ENCODE measurements at regions of chr11 and their contacts with region 1.

Region 1: GRCh38 chr11:57792060-57792541 is 30.5 kb downstream of the CTNND1 start:
- DNase-seq: peak; percentile 89
- ATAC-seq: peak; percentile 96
- H3K4me3 Mint-ChIP-seq: peak overlapping the region; percentile 34
- H3K27ac Mint-ChIP-seq: peak overlapping the region; percentile 89
- H3K4me1 Mint-ChIP-seq: peaks cover 33% of the 10 kb centered on the region
- H3K27me3 Mint-ChIP-seq: no peaks in the 10 kb centered on the region

Region 2: GRCh38 chr11:57712256-57713150 is 79.6 kb before region 1 on chr11 and contains the start of gene TMX2:
- CTCF ChIA-PET with region 1: no interaction called
- POLR2A ChIA-PET with region 1: no interaction called
- intact Hi-C with region 1: loop called (anchors 2 kb)
- DNase-seq: peak; percentile 94
- ATAC-seq: peak; percentile 93
- H3K4me3 Mint-ChIP-seq: peak within 1 kb of the TSS; percentile 97
- H3K27ac Mint-ChIP-seq: peak within 1 kb of the TSS; percentile 97
- H3K4me1 Mint-ChIP-seq: peaks cover 50% of the 10 kb centered on the region
- H3K27me3 Mint-ChIP-seq: no peaks in the 10 kb centered on the region
- total RNA-seq, gene TMX2: 59.8 to 72.5 TPM

Region 3: GRCh38 chr11:57761301-57762234 is 30.5 kb before region 1 on chr11 and contains the start of gene CTNND1:
- CTCF ChIA-PET with region 1: no interaction called
- POLR2A ChIA-PET with region 1: no interaction called
- intact Hi-C with region 1: loop called in 1 of 2 experiments (anchors 2 kb)
- DNase-seq: peak; percentile 30
- ATAC-seq: peak; percentile 59
- H3K4me3 Mint-ChIP-seq: peak within 1 kb of the TSS; percentile 69
- H3K27ac Mint-ChIP-seq: peak within 1 kb of the TSS; percentile 32
- H3K4me1 Mint-ChIP-seq: peaks cover 37% of the 10 kb centered on the region
- H3K27me3 Mint-ChIP-seq: no peaks in the 10 kb centered on the region
- total RNA-seq, gene CTNND1: 6.7 to 7.4 TPM

Region 4: GRCh38 chr11:57873196-57873911 is 81.3 kb after region 1 on chr11:
- CTCF ChIA-PET with region 1: no interaction called
- POLR2A ChIA-PET with region 1: no interaction called
- intact Hi-C with region 1: no loop called
- DNase-seq: no peak
- ATAC-seq: no peak
- H3K4me3 Mint-ChIP-seq: no peak overlapping the region
- H3K27ac Mint-ChIP-seq: no peak overlapping the region
- H3K4me1 Mint-ChIP-seq: no peaks in the 10 kb centered on the region
- H3K27me3 Mint-ChIP-seq: peaks cover 6% of the 10 kb centered on the region

Region 5: GRCh38 chr11:58573451-58574104 is 781.5 kb after region 1 on chr11:
- CTCF ChIA-PET with region 1: no interaction called
- POLR2A ChIA-PET with region 1: no interaction called
- intact Hi-C with region 1: loop called in 1 of 2 experiments (anchors 2 kb)
- DNase-seq: peak; percentile 84
- ATAC-seq: peak; percentile 26
- H3K4me3 Mint-ChIP-seq: peak overlapping the region; percentile 89
- H3K27ac Mint-ChIP-seq: peak overlapping the region; percentile 96
- H3K4me1 Mint-ChIP-seq: peaks cover 51% of the 10 kb centered on the region
- H3K27me3 Mint-ChIP-seq: no peaks in the 10 kb centered on the region